Right ventricle myocardium superior (tissue), 1 donor: ENCODE measurements at regions of chr2 and their contacts with region 1.

Region 1: DNA sequence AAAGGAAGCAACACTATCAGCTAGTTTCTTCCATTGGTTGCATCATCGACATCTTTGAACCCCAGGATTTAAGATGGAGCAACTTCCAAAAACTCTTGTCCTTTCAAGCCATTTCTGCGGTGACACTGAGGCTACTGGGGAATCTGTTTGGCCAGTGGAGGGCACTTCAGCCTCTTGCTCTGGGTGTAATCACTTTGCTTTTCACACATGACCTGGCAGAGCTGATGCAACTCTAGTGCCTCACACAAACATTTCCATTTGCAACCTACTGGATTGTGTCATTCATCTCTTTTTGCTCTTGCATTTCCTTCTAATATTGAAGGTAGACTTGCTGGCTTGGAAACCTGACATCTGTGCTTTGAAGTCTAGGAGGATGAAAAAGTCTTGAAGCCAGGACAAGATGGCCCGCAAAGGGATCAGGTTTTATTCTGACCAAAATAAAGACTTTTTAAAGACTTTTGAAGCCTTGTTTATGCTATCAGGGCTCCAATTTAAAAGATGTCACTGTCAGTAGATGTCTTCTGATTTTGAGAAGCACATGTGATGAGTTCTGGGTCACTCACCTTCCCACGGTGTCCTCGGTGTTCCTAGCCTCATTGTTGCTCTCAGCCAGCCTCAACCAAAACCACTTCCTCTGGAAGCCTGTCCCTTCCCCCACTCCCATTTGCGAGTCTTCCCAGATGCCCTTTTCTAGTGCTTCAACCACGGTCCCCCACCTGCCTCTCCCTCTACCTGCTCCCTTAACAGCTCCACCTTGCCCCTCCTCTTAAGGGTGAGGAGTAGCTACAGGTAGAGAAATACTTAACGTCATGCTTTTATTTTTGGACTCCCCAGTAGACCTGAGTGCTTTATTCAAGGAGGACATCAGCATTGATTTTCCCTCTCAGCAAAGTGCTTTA is 69.7 kb upstream of the KCNE4 start:
- DNase-seq: no peak
- ATAC-seq: peak; percentile 93

Region 2: GRCh38 chr2:223093436-223094241 is 111.4 kb after region 1 on chr2:
- intact Hi-C with region 1: loop called (anchors 10 kb)
- DNase-seq: peak; percentile 81
- ATAC-seq: peak; percentile 91